ENCODE measurements at regions of chr3 and their contacts with region 1.

Region 1: GRCh38 chr3:72482589-72483321 is 365.5 kb downstream of the SHQ1 start:
- DNase-seq: peak; percentile 85
- H3K4me3 Mint-ChIP-seq: peak overlapping the region; percentile 78
- H3K27ac Mint-ChIP-seq: peak overlapping the region; percentile 96
- H3K4me1 Mint-ChIP-seq: peaks cover 67% of the 10 kb centered on the region
- H3K27me3 Mint-ChIP-seq: no peaks in the 10 kb centered on the region

Region 2: DNA sequence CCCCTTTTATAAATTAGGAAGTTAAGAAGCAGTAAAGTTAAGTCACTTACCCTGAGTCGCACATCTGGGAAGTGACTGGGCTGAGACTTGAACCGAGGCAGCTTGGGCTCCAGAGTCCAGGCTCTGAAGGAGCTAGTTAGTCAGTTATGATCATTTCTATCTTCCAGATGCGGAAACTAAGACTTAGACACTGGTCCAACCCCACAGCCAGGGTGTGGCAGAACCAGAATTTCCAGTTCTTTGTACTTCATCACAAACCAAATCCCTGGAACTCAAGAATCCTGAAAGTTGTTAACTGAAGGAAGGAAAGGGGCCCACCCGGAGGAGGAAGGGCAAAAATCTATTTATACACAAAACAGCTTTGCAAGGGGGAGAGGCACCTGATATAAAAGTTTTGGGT is 24.4 kb before region 1 on chr3:
- intact Hi-C with region 1: loop called (anchors 1 kb)
- DNase-seq: no peak
- H3K4me3 Mint-ChIP-seq: no peak overlapping the region
- H3K27ac Mint-ChIP-seq: no peak overlapping the region
- H3K4me1 Mint-ChIP-seq: peaks cover 20% of the 10 kb centered on the region
- H3K27me3 Mint-ChIP-seq: no peaks in the 10 kb centered on the region

Region 3: GRCh38 chr3:72523429-72524151 is 40.8 kb after region 1 on chr3:
- intact Hi-C with region 1: loop called (anchors 1 kb)
- DNase-seq: no peak
- H3K4me3 Mint-ChIP-seq: no peak overlapping the region
- H3K27ac Mint-ChIP-seq: peak overlapping the region; percentile 91
- H3K4me1 Mint-ChIP-seq: peaks cover 36% of the 10 kb centered on the region
- H3K27me3 Mint-ChIP-seq: no peaks in the 10 kb centered on the region

Region 4: DNA sequence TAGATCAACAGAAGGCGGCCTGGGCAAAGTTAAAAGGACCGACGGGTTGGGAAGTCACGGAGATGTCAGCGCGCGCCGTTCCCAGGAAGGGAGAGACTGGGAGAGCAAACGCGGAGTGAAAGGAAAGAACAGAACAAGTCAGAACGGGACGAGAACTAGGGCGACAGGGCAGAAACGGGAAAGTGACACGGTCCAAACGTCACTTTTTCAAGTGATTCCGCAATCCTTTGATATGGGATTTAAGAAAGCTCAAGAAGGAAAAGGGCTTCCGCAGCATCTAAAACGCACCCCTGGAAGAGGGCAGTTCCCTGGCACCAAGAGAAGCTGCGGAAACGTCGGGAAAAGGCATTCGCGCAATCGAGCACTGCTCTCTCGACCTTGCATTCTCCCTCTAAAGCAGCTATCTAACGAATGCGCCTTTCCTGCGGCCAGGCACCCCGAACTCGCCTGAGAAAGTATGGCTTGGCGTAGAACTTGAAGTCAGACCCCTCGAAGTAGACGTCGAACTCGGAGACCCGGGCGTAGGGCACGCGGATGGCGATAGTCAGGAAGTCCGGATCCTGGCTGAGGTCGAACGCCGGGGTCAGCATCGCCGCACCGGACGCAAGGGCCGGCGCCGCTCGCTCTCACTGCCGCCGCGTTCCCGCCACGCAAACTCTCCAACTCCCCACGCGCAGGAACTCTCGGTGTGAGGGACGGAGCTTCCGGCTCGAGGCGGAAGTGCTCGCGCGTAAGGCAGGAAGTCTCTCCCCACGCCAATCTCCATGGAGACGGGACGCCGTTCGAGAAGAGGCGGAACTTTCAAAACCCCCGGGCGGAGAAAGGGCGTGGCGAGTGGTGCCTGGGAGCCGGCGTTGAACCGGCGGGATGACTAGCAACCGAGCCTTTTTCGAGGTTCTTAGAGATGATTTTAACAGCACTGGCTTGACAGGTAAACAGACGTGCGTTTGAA is 365.3 kb after region 1 on chr3 and contains the start of gene SHQ1:
- intact Hi-C with region 1: loop called (anchors 5 kb)
- DNase-seq: peak; percentile 99
- H3K4me3 Mint-ChIP-seq: peak within 1 kb of the TSS; percentile 93
- H3K27ac Mint-ChIP-seq: peak within 1 kb of the TSS; percentile 91
- H3K4me1 Mint-ChIP-seq: peaks cover 41% of the 10 kb centered on the region
- H3K27me3 Mint-ChIP-seq: no peaks in the 10 kb centered on the region
- total RNA-seq, gene SHQ1: 46.8 and 47.2 TPM in 2 replicates

Measured in activated CD4-positive, alpha-beta T cell treated with anti-CD3 and anti-CD28 coated beads, Interleukin-2, amount 10 ng/mL, durations not matched to agents 24 days and 14 days (primary cell).